ENCODE measurements at regions of chr2 and their contacts with region 1.

Region 1: DNA sequence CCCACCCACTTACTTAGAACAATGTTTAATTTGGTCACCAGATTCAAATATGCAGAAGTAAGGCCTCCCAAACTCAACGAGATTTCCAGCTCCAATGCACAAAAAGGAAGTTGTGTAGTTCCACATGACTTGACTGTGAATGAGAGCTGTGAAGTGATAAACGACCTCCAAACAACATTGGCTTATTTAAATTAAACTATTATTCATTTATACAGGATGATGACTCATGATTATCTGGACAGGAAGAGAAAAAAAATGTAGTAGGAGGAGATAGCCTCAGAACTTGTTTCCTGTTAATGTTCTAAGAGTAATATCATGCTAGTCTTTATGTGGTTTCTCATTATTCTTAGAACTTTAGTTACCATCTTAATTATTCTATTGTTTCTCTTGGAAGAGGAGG is 237.3 kb downstream of the C1D start:
- DNase-seq: peak; percentile 87
- H3K4me3 ChIP-seq: peak overlapping the region; percentile 6
- H3K27ac ChIP-seq: peak overlapping the region; percentile 72
- H3K4me1 ChIP-seq: peaks cover 36% of the 10 kb centered on the region
- H3K27me3 ChIP-seq: no peaks in the 10 kb centered on the region
- CTCF ChIP-seq: no peak

Region 2: GRCh38 chr2:67642053-67642397 is 183.5 kb before region 1 on chr2:
- CTCF ChIA-PET with region 1: no interaction called
- POLR2A ChIA-PET with region 1: interaction called, 15 read pairs
- intact Hi-C with region 1: no loop called
- DNase-seq: peak; percentile 9
- H3K4me3 ChIP-seq: no peak overlapping the region
- H3K27ac ChIP-seq: no peak overlapping the region
- H3K4me1 ChIP-seq: no peaks in the 10 kb centered on the region
- H3K27me3 ChIP-seq: no peaks in the 10 kb centered on the region
- CTCF ChIP-seq: no peak

Measured in A673 (cell line).